ENCODE measurements at regions of chr6 and their contacts with region 1.

Region 1: DNA sequence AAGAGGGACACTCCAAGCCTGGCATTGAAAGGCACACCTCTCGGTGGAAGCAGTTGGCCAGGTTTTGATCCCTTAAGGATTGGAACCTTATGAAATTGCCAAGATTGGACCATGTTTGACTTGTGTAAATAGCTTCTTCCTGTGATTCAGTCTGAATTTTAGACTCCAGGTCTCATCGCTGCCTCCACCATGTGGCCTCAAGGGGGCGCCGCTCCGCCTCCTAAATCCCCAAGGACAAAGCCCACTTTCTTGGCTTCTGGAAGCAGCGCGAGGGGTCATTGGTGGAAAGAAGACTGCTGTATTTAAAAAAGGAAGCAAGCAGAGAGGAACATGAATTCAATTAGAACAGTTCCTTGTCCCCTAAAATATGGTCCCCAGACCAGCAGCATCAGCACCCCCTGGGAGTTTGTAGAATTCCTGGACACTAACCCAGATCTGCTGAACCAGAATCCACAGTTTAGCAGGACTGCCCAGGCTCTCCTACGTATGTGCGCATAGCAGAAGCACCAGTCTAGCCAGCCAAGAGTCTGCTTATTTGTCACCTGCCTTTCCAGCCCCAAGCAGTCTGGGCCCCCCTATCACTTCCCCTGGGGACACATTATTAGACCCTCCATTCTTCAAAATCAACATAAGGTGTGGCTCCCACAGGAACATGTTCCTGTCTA is 108.5 kb downstream of the LY86 start:
- DNase-seq: peak; percentile 49 to 57
- H3K4me3 ChIP-seq: no peak overlapping the region
- H3K27ac ChIP-seq: no peak overlapping the region
- H3K4me1 ChIP-seq: peaks cover 29% of the 10 kb centered on the region
- H3K27me3 ChIP-seq: no peaks in the 10 kb centered on the region
- CTCF ChIP-seq: peak; percentile 71

Region 2: GRCh38 chr6:6712258-6712999 is 15.4 kb after region 1 on chr6:
- CTCF ChIA-PET with region 1: interaction called, 5 read pairs
- POLR2A ChIA-PET with region 1: interaction called, 5 read pairs
- intact Hi-C with region 1: loop called (anchors 1 kb)
- DNase-seq: peak; percentile 79 to 96
- H3K4me3 ChIP-seq: peak overlapping the region; percentile 23; the same call in 1 of the 2 replicates
- H3K27ac ChIP-seq: peak overlapping the region; percentile 83
- H3K4me1 ChIP-seq: peaks cover 21% of the 10 kb centered on the region
- H3K27me3 ChIP-seq: no peaks in the 10 kb centered on the region
- CTCF ChIP-seq: no peak; the same call in 1 of the 2 replicates

Region 3: GRCh38 chr6:7008484-7008883 is 311.5 kb after region 1 on chr6:
- CTCF ChIA-PET with region 1: interaction called, 12 read pairs
- POLR2A ChIA-PET with region 1: no interaction called
- intact Hi-C with region 1: no loop called
- DNase-seq: peak; percentile 41 to 83
- H3K4me3 ChIP-seq: no peak overlapping the region
- H3K27ac ChIP-seq: peak overlapping the region; percentile 51
- H3K4me1 ChIP-seq: peaks cover 16% of the 10 kb centered on the region
- H3K27me3 ChIP-seq: no peaks in the 10 kb centered on the region
- CTCF ChIP-seq: no peak

Region 4: GRCh38 chr6:7261032-7261841 is 564.2 kb after region 1 on chr6:
- CTCF ChIA-PET with region 1: interaction called, 3 read pairs
- POLR2A ChIA-PET with region 1: interaction called, 15 read pairs
- intact Hi-C with region 1: no loop called
- DNase-seq: peak; percentile 74 to 92
- H3K4me3 ChIP-seq: peak overlapping the region; percentile 62; the same call in 1 of the 2 replicates
- H3K27ac ChIP-seq: no peak overlapping the region; the same call in 1 of the 2 replicates
- H3K4me1 ChIP-seq: peaks cover 7% of the 10 kb centered on the region
- H3K27me3 ChIP-seq: no peaks in the 10 kb centered on the region
- CTCF ChIP-seq: no peak

Region 5: GRCh38 chr6:7439228-7439627 is 742.2 kb after region 1 on chr6:
- CTCF ChIA-PET with region 1: no interaction called
- POLR2A ChIA-PET with region 1: interaction called, 10 read pairs
- intact Hi-C with region 1: no loop called
- DNase-seq: no peak
- H3K4me3 ChIP-seq: no peak overlapping the region
- H3K27ac ChIP-seq: no peak overlapping the region
- H3K4me1 ChIP-seq: no peaks in the 10 kb centered on the region
- H3K27me3 ChIP-seq: no peaks in the 10 kb centered on the region
- CTCF ChIP-seq: no peak